Activated B cell treated with CpG ODN at 0.5 μM for 24 hours (primary cell): ENCODE measurements at regions of chr14 and their contacts with region 1.

Region 1: GRCh38 chr14:80996049-80996901 is 40.9 kb downstream of the TSHR start:
- DNase-seq: no peak
- ATAC-seq: peak; percentile 77
- H3K4me3 Mint-ChIP-seq: no peak overlapping the region
- H3K27ac Mint-ChIP-seq: no peak overlapping the region
- H3K4me1 Mint-ChIP-seq: peaks cover 4% of the 10 kb centered on the region
- H3K27me3 Mint-ChIP-seq: peaks cover 7% of the 10 kb centered on the region
- CTCF ChIP-seq: no peak

Region 2: GRCh38 chr14:81062816-81063215 is 66.5 kb after region 1 on chr14:
- CTCF ChIA-PET with region 1: interaction called, 4 read pairs
- POLR2A ChIA-PET with region 1: no interaction called
- intact Hi-C with region 1: loop called (anchors 2 kb)
- DNase-seq: no peak
- ATAC-seq: peak; percentile 69
- H3K4me3 Mint-ChIP-seq: no peak overlapping the region
- H3K27ac Mint-ChIP-seq: no peak overlapping the region
- H3K4me1 Mint-ChIP-seq: no peaks in the 10 kb centered on the region
- H3K27me3 Mint-ChIP-seq: peaks cover 6% of the 10 kb centered on the region
- CTCF ChIP-seq: no peak

Region 3: DNA sequence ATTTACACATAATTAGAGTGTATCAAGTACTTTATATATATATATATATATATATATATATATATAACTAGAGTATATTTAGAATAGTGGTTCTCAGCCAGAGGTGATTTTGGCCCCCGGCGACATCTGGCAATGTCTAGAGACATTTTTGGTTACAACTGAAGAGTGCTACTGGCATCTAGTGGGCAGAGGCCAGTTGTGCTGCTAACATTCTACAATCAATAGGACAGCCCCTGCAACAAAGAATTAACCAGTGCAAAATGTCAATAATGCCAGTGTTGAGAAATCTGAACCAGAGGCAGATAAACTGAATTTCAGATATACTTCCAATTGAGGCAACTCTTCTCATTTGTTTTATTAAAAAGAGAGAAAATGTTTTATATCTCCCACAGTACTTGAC is 215.6 kb after region 1 on chr14:
- CTCF ChIA-PET with region 1: interaction called, 29 read pairs
- POLR2A ChIA-PET with region 1: no interaction called
- intact Hi-C with region 1: loop called (anchors 1 kb)
- DNase-seq: no peak
- ATAC-seq: peak; percentile 80
- H3K4me3 Mint-ChIP-seq: no peak overlapping the region
- H3K27ac Mint-ChIP-seq: no peak overlapping the region
- H3K4me1 Mint-ChIP-seq: peaks cover 53% of the 10 kb centered on the region
- H3K27me3 Mint-ChIP-seq: no peaks in the 10 kb centered on the region
- CTCF ChIP-seq: no peak

Region 4: DNA sequence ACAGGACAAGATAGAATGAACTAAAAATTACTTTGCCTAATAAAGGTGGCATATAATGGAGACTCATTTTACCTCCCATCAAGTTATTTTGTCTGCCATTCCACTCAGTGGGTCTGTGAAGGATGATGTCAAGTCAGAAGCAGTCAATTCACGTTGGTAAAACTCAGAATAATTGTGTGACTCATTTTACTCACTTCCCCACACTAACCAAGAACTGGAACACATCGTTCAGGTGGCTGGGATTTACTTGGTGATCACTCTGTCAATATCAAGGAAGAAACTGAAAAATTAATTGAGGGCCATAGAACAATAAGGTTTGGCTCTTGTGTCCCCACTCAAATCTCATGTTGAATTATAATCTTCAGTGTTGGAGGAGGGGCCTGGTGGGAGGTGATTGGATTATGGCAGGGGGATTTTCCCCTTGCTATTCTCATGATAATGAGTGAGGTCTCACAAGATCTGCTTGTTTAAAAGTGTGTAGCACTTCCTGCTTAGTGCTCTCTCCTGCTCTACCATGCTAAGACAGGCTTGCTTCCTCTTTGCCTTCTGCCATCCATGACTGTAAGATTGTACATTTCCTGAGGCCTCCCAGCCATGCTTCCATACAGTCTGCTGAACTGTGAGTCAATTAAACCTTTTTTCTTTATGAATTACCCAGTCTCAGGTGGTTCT is 260.1 kb after region 1 on chr14:
- CTCF ChIA-PET with region 1: no interaction called
- POLR2A ChIA-PET with region 1: no interaction called
- intact Hi-C with region 1: no loop called
- DNase-seq: no peak
- ATAC-seq: peak; percentile 90
- H3K4me3 Mint-ChIP-seq: peak overlapping the region; percentile 52
- H3K27ac Mint-ChIP-seq: peak overlapping the region; percentile 73
- H3K4me1 Mint-ChIP-seq: peaks cover 19% of the 10 kb centered on the region
- H3K27me3 Mint-ChIP-seq: peaks cover 10% of the 10 kb centered on the region
- CTCF ChIP-seq: no peak

Region 5: GRCh38 chr14:81453166-81453766 is 457.0 kb after region 1 on chr14:
- CTCF ChIA-PET with region 1: no interaction called
- POLR2A ChIA-PET with region 1: no interaction called
- intact Hi-C with region 1: loop called (anchors 2 kb)
- DNase-seq: no peak
- ATAC-seq: peak; percentile 85
- H3K4me3 Mint-ChIP-seq: no peak overlapping the region
- H3K27ac Mint-ChIP-seq: no peak overlapping the region
- H3K4me1 Mint-ChIP-seq: peaks cover 14% of the 10 kb centered on the region
- H3K27me3 Mint-ChIP-seq: peaks cover 18% of the 10 kb centered on the region
- CTCF ChIP-seq: peak; percentile 49

Region 6: GRCh38 chr14:81464247-81465002 is 468.1 kb after region 1 on chr14:
- CTCF ChIA-PET with region 1: interaction called, 12 read pairs
- POLR2A ChIA-PET with region 1: no interaction called
- intact Hi-C with region 1: no loop called
- DNase-seq: no peak
- ATAC-seq: peak; percentile 76
- H3K4me3 Mint-ChIP-seq: peak overlapping the region; percentile 81
- H3K27ac Mint-ChIP-seq: peak overlapping the region; percentile 76
- H3K4me1 Mint-ChIP-seq: peaks cover 6% of the 10 kb centered on the region
- H3K27me3 Mint-ChIP-seq: no peaks in the 10 kb centered on the region
- CTCF ChIP-seq: peak; percentile 77